ENCODE measurements at regions of chr10 and their contacts with region 1.

Region 1: DNA sequence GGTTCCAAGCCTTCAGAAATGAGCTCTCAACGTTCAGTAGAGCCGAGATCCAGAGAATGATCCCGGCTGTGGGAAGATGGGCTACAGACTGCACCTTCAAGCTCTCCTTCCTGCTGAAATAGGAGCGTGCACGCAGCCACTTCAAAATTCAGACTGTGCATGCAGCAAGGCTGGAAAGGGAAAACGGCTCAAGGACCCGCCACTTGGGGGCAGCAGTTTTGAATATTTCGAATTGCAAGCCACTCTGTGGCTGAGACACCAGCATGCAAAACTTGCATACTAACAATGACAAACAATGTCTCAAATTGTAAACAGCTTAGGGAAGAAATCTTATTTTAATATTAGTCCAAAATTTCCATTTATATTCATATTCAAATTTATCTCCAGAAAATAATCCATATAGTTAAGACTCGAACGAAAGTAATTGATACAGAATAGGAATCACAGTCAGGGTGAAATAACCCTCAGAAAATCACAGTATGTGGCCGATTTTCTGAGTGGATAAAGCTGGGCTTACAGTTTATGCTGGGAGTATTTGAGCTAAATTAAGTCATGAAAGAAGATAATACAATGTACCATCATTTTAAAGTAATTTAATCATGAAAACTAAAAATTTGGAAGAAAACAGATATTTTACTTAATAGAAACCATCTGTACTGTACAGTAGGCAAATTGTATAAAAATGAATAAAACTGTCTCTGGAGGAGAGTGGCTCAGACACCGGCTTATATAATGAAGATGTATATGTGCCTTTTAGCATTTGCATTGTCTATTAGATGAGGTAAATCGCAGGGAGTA is 137.9 kb upstream of the MKI67 start:
- DNase-seq: peak; percentile 77
- ATAC-seq: no peak
- H3K4me3 Mint-ChIP-seq: no peak overlapping the region
- H3K27ac Mint-ChIP-seq: no peak overlapping the region
- H3K4me1 Mint-ChIP-seq: no peaks in the 10 kb centered on the region
- H3K27me3 Mint-ChIP-seq: peaks cover 33% of the 10 kb centered on the region
- CTCF ChIP-seq: peak; percentile 37

Region 2: GRCh38 chr10:128526791-128527375 is 262.8 kb after region 1 on chr10:
- CTCF ChIA-PET with region 1: interaction called, 4 read pairs
- POLR2A ChIA-PET with region 1: no interaction called
- intact Hi-C with region 1: loop called (anchors 10 kb)
- DNase-seq: no peak
- ATAC-seq: no peak
- H3K4me3 Mint-ChIP-seq: no peak overlapping the region
- H3K27ac Mint-ChIP-seq: no peak overlapping the region
- H3K4me1 Mint-ChIP-seq: no peaks in the 10 kb centered on the region
- H3K27me3 Mint-ChIP-seq: peaks cover 2% of the 10 kb centered on the region
- CTCF ChIP-seq: no peak

Region 3: GRCh38 chr10:128859738-128860386 is 595.8 kb after region 1 on chr10:
- CTCF ChIA-PET with region 1: interaction called, 5 read pairs
- POLR2A ChIA-PET with region 1: no interaction called
- intact Hi-C with region 1: loop called (anchors 10 kb)
- DNase-seq: peak; percentile 62
- ATAC-seq: no peak
- H3K4me3 Mint-ChIP-seq: no peak overlapping the region
- H3K27ac Mint-ChIP-seq: no peak overlapping the region
- H3K4me1 Mint-ChIP-seq: no peaks in the 10 kb centered on the region
- H3K27me3 Mint-ChIP-seq: no peaks in the 10 kb centered on the region
- CTCF ChIP-seq: peak; percentile 57